Calu3 (cell line): ENCODE measurements at regions of chr5 and their contacts with region 1.

Region 1: DNA sequence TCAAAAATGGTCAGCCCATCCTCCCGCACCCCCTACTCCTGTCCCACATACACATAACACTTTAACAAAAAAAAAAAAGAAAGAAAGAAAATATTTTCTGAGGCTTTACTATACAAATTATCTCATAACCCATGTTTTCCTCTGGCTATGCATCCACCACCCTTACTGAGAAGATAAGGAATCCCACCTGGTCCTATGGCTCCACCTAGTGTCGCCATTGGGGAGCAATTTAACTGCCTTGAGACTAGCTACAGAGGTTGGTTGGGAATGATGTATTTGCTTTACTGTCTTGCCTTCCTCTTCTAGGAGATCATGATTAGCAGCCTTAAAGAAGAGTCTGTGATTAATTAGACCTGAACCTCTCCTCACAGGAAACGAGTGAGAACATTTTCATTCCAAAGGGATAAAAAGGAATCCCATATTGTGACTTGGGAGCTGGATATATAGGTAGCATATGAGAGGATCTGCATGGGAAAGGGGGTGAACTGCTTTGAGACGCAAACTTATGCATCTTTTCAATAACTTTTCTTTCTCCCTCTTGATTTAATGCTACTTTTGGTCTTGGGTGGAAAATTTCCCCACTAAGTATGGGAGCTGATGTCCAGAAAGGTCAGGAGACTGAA is 77.7 kb upstream of the SELENOP start:
- DNase-seq: peak; percentile 86
- H3K4me3 Mint-ChIP-seq: no peak overlapping the region
- H3K27ac Mint-ChIP-seq: no peak overlapping the region
- H3K4me1 Mint-ChIP-seq: no peaks in the 10 kb centered on the region
- H3K27me3 Mint-ChIP-seq: no peaks in the 10 kb centered on the region
- CTCF ChIP-seq: peak; percentile 69

Region 2: GRCh38 chr5:42057254-42057690 is 832.1 kb before region 1 on chr5:
- CTCF ChIA-PET with region 1: interaction called, 3 read pairs
- intact Hi-C with region 1: loop called (anchors 10 kb)
- DNase-seq: peak; percentile 66
- H3K4me3 Mint-ChIP-seq: no peak overlapping the region
- H3K27ac Mint-ChIP-seq: no peak overlapping the region
- H3K4me1 Mint-ChIP-seq: peaks cover 8% of the 10 kb centered on the region
- H3K27me3 Mint-ChIP-seq: no peaks in the 10 kb centered on the region
- CTCF ChIP-seq: peak; percentile 53

Region 3: GRCh38 chr5:42514754-42515153 is 374.7 kb before region 1 on chr5:
- CTCF ChIA-PET with region 1: interaction called, 4 read pairs
- intact Hi-C with region 1: loop called (anchors 5 kb)
- DNase-seq: no peak
- H3K4me3 Mint-ChIP-seq: no peak overlapping the region
- H3K27ac Mint-ChIP-seq: no peak overlapping the region
- H3K4me1 Mint-ChIP-seq: no peaks in the 10 kb centered on the region
- H3K27me3 Mint-ChIP-seq: peaks cover 2% of the 10 kb centered on the region
- CTCF ChIP-seq: no peak

Region 4: GRCh38 chr5:42636425-42636824 is 253.0 kb before region 1 on chr5:
- CTCF ChIA-PET with region 1: interaction called, 4 read pairs
- intact Hi-C with region 1: loop called (anchors 10 kb)
- DNase-seq: no peak
- H3K4me3 Mint-ChIP-seq: no peak overlapping the region
- H3K27ac Mint-ChIP-seq: no peak overlapping the region
- H3K4me1 Mint-ChIP-seq: no peaks in the 10 kb centered on the region
- H3K27me3 Mint-ChIP-seq: peaks cover 30% of the 10 kb centered on the region
- CTCF ChIP-seq: peak; percentile 32

Region 5: GRCh38 chr5:42807722-42808447 is 81.5 kb before region 1 on chr5:
- CTCF ChIA-PET with region 1: interaction called, 4 read pairs
- intact Hi-C with region 1: loop called (anchors 5 kb)
- DNase-seq: no peak
- H3K4me3 Mint-ChIP-seq: no peak overlapping the region
- H3K27ac Mint-ChIP-seq: no peak overlapping the region
- H3K4me1 Mint-ChIP-seq: peaks cover 14% of the 10 kb centered on the region
- H3K27me3 Mint-ChIP-seq: no peaks in the 10 kb centered on the region
- CTCF ChIP-seq: no peak

Region 6: GRCh38 chr5:42840269-42840668 is 49.2 kb before region 1 on chr5:
- CTCF ChIA-PET with region 1: no interaction called
- intact Hi-C with region 1: no loop called
- DNase-seq: no peak
- H3K4me3 Mint-ChIP-seq: no peak overlapping the region
- H3K27ac Mint-ChIP-seq: no peak overlapping the region
- H3K4me1 Mint-ChIP-seq: peaks cover 21% of the 10 kb centered on the region
- H3K27me3 Mint-ChIP-seq: no peaks in the 10 kb centered on the region
- CTCF ChIP-seq: no peak